ENCODE measurements at regions of chr1 and their contacts with region 1.

Region 1: DNA sequence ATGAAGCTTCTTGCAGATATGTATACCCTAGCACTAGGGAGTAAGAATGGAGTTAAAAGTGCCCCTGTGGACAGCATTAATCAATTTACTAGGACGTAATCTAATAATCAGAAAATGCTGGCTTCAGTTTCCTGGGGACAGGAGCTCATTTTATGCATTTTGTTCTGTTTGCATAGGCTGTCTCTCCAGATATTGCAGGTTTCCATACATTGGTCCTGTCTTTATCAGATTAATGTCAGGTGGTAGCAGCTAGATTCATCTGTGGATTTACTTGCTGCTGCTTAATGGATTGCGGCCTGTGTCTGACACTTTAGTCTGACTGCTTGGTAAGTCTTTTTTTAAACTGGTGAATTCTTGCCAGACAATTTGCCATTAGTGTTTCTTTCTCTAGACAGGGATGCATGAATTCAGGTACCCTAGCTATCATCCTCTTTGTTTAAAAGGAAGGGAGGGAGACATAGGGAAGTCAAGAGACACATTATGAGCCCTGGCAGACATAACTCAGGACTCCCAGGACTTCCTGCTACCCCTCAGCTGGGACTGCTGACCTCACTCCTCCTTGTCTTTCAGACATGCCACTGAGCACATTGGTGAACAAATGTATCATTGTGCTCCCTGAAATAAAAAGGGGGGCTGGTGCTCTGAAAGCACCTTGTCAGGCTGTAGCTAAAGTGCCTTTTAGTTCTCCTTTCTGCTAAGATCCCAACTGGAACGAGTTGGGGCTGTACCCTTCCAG is 47.7 kb downstream of the NOS1AP start:
- DNase-seq: no peak
- H3K4me3 ChIP-seq: no peak overlapping the region
- H3K27ac ChIP-seq: no peak overlapping the region
- H3K4me1 ChIP-seq: peaks cover 4% of the 10 kb centered on the region
- H3K27me3 ChIP-seq: no peaks in the 10 kb centered on the region
- CTCF ChIP-seq: no peak

Region 2: GRCh38 chr1:162087111-162087510 is 30.1 kb before region 1 on chr1:
- CTCF ChIA-PET with region 1: no interaction called
- dilution Hi-C with region 1: no loop called
- in situ Hi-C with region 1: no loop called
- intact Hi-C with region 1: loop called (anchors 1 kb)
- DNase-seq: no peak
- H3K4me3 ChIP-seq: no peak overlapping the region
- H3K27ac ChIP-seq: no peak overlapping the region
- H3K4me1 ChIP-seq: no peaks in the 10 kb centered on the region
- H3K27me3 ChIP-seq: no peaks in the 10 kb centered on the region
- CTCF ChIP-seq: no peak